ENCODE measurements at regions of chr5 and their contacts with region 1.

Region 1: GRCh38 chr5:36870399-36871040 is 6.0 kb upstream of the NIPBL start:
- DNase-seq: peak; percentile 72
- ATAC-seq: peak; percentile 85
- H3K4me3 ChIP-seq: no peak overlapping the region
- H3K27ac ChIP-seq: no peak overlapping the region
- H3K4me1 ChIP-seq: peaks cover 26% of the 10 kb centered on the region
- H3K27me3 ChIP-seq: no peaks in the 10 kb centered on the region; a peak in 1 of 5 replicates
- CTCF ChIP-seq: peak; percentile 68
- EP300 ChIP-seq: no peak
- POLR2A ChIP-seq: no peak
- RAD21 ChIP-seq: 0 out of 2 replicates have a peak, but pooled peaks have one; percentile 15

Region 2: DNA sequence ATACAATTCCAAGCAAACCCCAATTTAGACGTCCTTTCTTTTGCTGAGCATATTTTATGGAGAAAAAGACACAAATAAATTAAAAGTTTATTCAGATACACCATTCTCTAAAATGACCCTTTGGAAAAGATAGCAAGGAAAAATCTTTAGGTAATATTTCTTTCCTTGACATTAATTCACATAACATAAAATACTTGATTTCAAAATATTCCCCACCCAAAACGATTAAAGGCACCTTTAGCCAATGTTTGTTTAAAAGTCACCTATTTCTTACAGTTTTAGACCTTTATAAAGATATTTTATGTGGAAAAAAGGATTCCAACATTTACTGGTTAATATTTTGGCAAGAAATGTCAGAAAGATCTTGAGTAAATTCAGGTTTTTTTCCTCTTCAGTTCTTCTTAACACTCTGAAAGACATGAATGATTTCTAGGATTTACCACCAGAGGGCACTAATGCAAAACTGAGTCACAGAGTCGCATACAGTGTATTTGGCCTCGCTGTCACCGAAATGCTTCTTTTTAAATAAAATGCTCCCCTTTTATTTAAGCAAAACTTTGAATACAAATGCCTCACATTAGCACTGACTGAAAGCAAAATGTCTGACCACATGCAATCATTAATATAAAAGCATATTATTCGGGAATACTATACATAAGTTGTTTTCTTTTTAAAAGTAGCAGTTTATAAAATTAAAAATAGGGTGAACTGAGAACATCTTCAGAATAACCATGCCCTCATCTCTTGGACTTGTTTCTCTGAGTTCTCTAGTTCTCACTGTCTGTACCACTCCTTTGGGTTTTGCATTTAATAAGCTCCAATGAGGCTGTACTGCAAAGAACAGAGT is 141.6 kb before region 1 on chr5:
- CTCF ChIA-PET with region 1: interaction called, 6 read pairs
- POLR2A ChIA-PET with region 1: no interaction called
- in situ Hi-C with region 1: no loop called
- intact Hi-C with region 1: loop called (anchors 1 kb)
- DNase-seq: peak; percentile 65
- ATAC-seq: peak; percentile 77
- H3K4me3 ChIP-seq: no peak overlapping the region
- H3K27ac ChIP-seq: no peak overlapping the region
- H3K4me1 ChIP-seq: no peaks in the 10 kb centered on the region
- H3K27me3 ChIP-seq: no peaks in the 10 kb centered on the region; a peak in 2 of 5 replicates
- CTCF ChIP-seq: peak; percentile 64
- EP300 ChIP-seq: no peak
- POLR2A ChIP-seq: no peak
- RAD21 ChIP-seq: no peak

Region 3: GRCh38 chr5:36739751-36740221 is 130.7 kb before region 1 on chr5:
- CTCF ChIA-PET with region 1: interaction called, 3 read pairs
- POLR2A ChIA-PET with region 1: no interaction called
- in situ Hi-C with region 1: loop called (anchors 5 kb)
- intact Hi-C with region 1: loop called (anchors 2 kb)
- DNase-seq: peak; percentile 39
- ATAC-seq: peak; percentile 50
- H3K4me3 ChIP-seq: no peak overlapping the region
- H3K27ac ChIP-seq: no peak overlapping the region
- H3K4me1 ChIP-seq: peaks cover 11% of the 10 kb centered on the region
- H3K27me3 ChIP-seq: peaks cover 0 to 19% of the 10 kb centered on the region in 2 experiments; a peak in 1 of 5 replicates
- CTCF ChIP-seq: peak; percentile 75
- EP300 ChIP-seq: no peak
- POLR2A ChIP-seq: no peak
- RAD21 ChIP-seq: peak; percentile 42; the same call in 1 of the 2 replicates

Region 4: DNA sequence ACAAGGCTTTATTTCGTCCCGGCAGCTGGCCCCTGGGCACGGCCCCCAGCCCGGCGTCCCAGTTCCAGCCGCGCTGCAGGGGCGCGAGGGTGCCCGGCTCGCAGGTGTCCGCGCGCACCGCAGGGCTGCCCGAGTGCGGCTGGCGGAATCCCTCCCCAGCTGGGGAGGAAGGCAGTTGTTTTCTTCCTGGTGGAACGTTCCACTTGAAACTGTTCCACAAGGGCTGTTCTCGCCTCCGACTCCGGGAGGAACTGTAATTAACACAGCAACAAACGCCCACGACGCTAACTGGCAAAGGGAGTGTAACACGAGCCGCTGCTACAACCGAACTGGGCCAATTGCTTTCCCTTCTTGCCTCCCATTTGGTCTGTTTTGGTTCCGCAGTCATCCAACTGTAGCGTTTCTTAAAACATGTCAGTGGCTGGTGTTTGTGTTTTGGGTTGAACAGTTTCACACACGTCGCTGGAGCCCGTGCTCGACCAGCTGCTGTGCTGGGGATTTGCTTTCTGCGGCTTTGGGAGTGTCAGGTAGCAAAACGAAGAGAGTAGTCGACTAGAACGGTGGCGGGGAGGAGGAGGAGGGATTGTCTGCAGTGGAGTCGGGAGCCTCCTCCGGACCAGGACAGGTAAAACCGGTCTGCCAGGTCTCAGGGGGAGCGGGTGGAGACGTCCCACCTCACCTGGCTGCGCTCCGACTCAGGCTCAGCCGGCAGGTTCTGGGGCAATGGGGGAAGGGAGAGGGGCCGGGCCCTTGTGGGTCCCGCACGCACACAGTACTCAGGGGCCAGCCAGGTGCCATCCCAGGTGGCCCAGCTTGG is 125.5 kb before region 1 on chr5:
- CTCF ChIA-PET with region 1: interaction called, 3 read pairs
- POLR2A ChIA-PET with region 1: interaction called, 4 read pairs
- in situ Hi-C with region 1: no loop called
- intact Hi-C with region 1: loop called (anchors 2 kb)
- DNase-seq: no peak
- ATAC-seq: peak; percentile 93
- H3K4me3 ChIP-seq: peak overlapping the region; percentile 62 to 77 (median 63)
- H3K27ac ChIP-seq: no peak overlapping the region
- H3K4me1 ChIP-seq: peaks cover 21% of the 10 kb centered on the region
- H3K27me3 ChIP-seq: peaks cover 1 to 41% of the 10 kb centered on the region in 2 experiments; a peak in 3 of 5 replicates
- CTCF ChIP-seq: no peak
- EP300 ChIP-seq: no peak
- POLR2A ChIP-seq: no peak
- RAD21 ChIP-seq: peak; percentile 50

Region 5: GRCh38 chr5:37015795-37016666 is 145.5 kb after region 1 on chr5:
- CTCF ChIA-PET with region 1: no interaction called
- POLR2A ChIA-PET with region 1: no interaction called
- in situ Hi-C with region 1: no loop called
- intact Hi-C with region 1: no loop called
- DNase-seq: no peak
- ATAC-seq: no peak
- H3K4me3 ChIP-seq: no peak overlapping the region
- H3K27ac ChIP-seq: no peak overlapping the region
- H3K4me1 ChIP-seq: no peaks in the 10 kb centered on the region
- H3K27me3 ChIP-seq: no peaks in the 10 kb centered on the region
- CTCF ChIP-seq: no peak
- EP300 ChIP-seq: no peak
- POLR2A ChIP-seq: no peak
- RAD21 ChIP-seq: no peak

Region 6: GRCh38 chr5:37121027-37121426 is 250.5 kb after region 1 on chr5:
- CTCF ChIA-PET with region 1: no interaction called
- POLR2A ChIA-PET with region 1: no interaction called
- in situ Hi-C with region 1: no loop called
- intact Hi-C with region 1: no loop called
- DNase-seq: no peak
- ATAC-seq: no peak
- H3K4me3 ChIP-seq: no peak overlapping the region
- H3K27ac ChIP-seq: no peak overlapping the region
- H3K4me1 ChIP-seq: no peaks in the 10 kb centered on the region
- H3K27me3 ChIP-seq: no peaks in the 10 kb centered on the region
- CTCF ChIP-seq: no peak
- EP300 ChIP-seq: no peak
- POLR2A ChIP-seq: no peak
- RAD21 ChIP-seq: no peak